OCI-LY7 (cell line): ENCODE measurements at regions of chr2 and their contacts with region 1.

Region 1: DNA sequence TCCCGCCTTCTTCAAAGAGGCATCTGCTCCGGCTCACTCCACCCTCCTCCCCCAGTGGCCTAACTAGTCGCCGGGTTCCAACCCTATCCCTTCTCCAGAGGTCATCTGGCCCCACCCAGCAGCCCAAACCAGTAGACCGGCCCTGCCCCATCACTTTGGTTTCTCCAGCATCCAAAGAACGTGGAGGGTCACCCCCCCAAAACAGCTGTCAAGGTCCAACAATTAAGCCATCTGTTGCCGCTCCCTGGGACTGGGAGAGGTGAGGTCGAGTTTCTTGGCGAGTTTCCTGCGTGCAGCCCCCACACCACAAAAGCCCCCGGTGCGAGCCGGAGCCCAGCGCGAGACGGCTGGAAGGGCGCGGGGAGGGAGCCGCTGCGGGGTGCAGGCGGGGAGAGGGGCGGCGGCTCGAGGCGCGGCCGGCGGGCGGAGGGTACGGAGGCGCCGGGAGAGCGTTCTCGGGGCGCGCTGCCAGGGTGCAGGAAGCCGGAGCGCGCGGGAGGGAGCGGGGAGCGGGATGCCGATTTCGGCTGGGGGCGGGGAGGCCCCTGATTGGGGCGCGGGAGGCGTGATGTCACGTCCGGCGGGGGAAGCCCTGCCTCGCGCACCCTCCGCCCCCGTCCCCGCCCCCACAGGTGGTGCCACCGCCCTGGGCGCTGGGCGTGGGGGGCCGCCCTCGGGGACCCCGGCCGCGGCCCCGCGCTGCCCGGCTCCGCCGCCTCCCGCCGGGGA is 571 bp upstream of the GPC1 start:
- DNase-seq: peak; percentile 93
- H3K4me3 ChIP-seq: peak overlapping the region; percentile 82
- H3K27ac ChIP-seq: no peak overlapping the region
- H3K4me1 ChIP-seq: peaks cover 6% of the 10 kb centered on the region
- CTCF ChIP-seq: no peak

Region 2: GRCh38 chr2:240021488-240022104 is 413.3 kb before region 1 on chr2:
- CTCF ChIA-PET with region 1: no interaction called
- POLR2A ChIA-PET with region 1: no interaction called
- intact Hi-C with region 1: loop called (anchors 10 kb)
- DNase-seq: peak; percentile 66
- H3K4me3 ChIP-seq: no peak overlapping the region
- H3K27ac ChIP-seq: no peak overlapping the region
- H3K4me1 ChIP-seq: peaks cover 19% of the 10 kb centered on the region
- CTCF ChIP-seq: peak; percentile 83

Region 3: DNA sequence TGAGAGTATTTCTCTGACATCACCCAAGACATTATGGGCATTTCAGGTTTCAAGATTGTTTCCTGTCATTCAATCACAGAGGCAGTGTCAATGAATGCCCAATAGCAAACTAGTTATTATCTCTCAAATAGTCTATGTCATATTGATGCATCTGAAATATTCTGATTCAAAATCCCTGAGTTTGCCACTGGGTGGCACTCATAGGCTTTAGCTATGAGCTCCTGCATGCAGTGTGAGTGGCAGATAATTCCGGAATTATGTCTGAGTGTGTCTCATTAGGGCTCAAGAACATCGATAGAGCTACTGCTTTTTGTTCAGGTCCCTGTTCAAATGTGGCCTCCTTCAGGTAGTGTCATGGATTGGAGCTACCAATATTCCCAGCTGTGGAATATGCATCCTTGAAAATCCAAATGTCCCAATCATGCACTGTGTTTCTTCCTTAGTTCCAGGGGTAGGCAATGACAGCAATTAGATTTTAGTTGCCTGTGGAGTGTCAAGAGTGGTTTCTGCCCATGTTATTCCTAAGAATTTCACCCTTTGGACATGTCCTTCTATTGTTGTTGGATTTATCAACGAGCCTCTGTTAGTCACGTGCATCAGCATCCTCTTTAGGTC is 373.8 kb before region 1 on chr2:
- CTCF ChIA-PET with region 1: no interaction called
- POLR2A ChIA-PET with region 1: no interaction called
- intact Hi-C with region 1: loop called (anchors 5 kb)
- DNase-seq: peak; percentile 63
- H3K4me3 ChIP-seq: no peak overlapping the region
- H3K27ac ChIP-seq: no peak overlapping the region
- H3K4me1 ChIP-seq: no peaks in the 10 kb centered on the region
- CTCF ChIP-seq: peak; percentile 83

Region 4: GRCh38 chr2:240149943-240150784 is 284.7 kb before region 1 on chr2:
- CTCF ChIA-PET with region 1: no interaction called
- POLR2A ChIA-PET with region 1: no interaction called
- intact Hi-C with region 1: loop called (anchors 1 kb)
- DNase-seq: peak; percentile 40
- H3K4me3 ChIP-seq: no peak overlapping the region
- H3K27ac ChIP-seq: no peak overlapping the region
- H3K4me1 ChIP-seq: no peaks in the 10 kb centered on the region
- CTCF ChIP-seq: peak; percentile 86

Region 5: DNA sequence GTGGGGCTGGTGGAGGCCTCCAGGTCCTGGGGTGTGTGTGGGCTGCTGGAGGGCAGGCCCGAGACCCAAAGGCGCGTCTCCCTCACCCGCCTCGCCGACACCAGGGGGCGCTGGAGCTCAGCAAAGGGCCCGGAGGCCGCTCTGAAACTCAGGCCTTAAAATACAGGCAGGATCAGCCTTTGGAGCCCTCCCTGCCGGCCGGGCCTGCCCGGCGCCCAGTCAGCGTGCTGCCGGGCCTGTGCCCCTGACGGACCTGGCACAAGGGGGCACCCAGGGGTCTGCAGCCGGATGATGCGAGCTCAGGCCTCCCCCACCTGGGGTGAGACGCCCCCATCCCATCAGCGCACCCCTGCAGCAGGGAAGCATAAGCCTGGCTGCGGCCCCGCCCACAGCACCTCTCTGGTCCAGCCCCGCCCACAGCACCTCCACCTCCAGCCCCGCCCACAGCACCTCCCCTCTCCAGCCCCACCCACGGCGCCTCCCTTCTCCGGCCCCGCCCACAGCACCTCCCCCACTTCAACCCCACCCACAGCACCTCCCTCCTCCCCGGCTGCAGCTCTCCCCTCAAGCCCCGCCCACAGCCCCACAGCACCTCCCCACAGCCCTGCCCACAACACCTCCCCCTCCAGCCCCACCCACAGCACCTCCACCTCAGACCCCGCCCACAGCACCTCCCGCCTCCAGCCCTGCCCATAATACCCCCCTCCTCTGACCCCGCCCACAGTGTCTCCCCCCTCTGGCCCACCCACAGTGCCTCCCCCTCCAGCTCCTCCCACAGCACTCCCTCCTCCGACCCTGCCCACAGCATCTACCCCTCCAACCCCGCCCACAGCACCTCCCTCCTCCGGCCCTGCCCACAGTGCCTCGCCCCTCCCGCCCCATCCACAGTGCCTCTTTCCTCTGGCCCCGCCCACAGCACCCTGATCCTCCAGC is 201.7 kb before region 1 on chr2:
- CTCF ChIA-PET with region 1: no interaction called
- POLR2A ChIA-PET with region 1: no interaction called
- intact Hi-C with region 1: loop called (anchors 1 kb)
- DNase-seq: peak; percentile 76
- H3K4me3 ChIP-seq: peak overlapping the region; percentile 55
- H3K27ac ChIP-seq: no peak overlapping the region
- H3K4me1 ChIP-seq: peaks cover 8% of the 10 kb centered on the region
- CTCF ChIP-seq: peak; percentile 74

Region 6: GRCh38 chr2:240468303-240469238 is 33.7 kb after region 1 on chr2:
- CTCF ChIA-PET with region 1: no interaction called
- POLR2A ChIA-PET with region 1: no interaction called
- intact Hi-C with region 1: no loop called
- DNase-seq: no peak
- H3K4me3 ChIP-seq: no peak overlapping the region
- H3K27ac ChIP-seq: no peak overlapping the region
- H3K4me1 ChIP-seq: no peaks in the 10 kb centered on the region
- CTCF ChIP-seq: no peak